ENCODE measurements at regions of chr13 and their contacts with region 1.

Region 1: DNA sequence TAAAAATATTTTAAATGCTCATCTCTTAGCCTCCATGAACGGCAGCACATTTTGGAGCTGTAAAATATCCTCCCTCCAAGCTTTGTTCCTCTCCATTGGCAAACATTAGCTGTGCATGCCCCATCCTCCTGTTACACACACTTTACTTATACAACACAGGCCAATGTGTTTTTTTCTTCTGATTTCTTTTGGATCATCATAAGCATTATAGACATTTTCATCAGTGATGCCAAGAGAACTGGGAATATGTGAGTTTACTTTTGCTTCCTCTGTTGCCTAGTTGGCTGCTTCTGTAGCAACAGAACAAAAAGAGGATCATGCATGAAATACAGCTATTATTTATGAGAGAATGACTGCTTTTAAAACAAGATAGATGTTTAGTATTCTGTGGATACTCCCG is 142.6 kb downstream of the PCDH9 start:
- DNase-seq: no peak

Region 2: DNA sequence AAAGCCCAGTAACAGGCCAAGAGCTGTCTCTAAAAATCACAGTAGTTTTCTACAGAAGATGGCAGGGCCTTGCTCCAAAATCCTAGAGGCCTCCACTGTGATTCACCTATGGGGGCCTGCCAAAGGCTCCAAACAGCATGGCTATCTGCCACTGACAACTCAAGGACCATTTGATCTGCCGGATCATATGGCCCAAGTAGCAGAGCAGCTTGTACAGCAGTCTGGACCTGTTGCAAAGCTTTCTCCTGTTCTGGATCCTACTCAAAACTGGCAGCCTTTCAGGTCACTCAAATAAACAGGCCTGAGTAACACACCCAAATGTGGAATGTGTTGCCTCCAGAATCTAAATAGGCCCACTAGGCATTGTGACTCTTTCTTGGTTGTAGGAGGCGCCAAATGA is 906.7 kb before region 1 on chr13:
- intact Hi-C with region 1: no loop called
- DNase-seq: no peak

Region 3: DNA sequence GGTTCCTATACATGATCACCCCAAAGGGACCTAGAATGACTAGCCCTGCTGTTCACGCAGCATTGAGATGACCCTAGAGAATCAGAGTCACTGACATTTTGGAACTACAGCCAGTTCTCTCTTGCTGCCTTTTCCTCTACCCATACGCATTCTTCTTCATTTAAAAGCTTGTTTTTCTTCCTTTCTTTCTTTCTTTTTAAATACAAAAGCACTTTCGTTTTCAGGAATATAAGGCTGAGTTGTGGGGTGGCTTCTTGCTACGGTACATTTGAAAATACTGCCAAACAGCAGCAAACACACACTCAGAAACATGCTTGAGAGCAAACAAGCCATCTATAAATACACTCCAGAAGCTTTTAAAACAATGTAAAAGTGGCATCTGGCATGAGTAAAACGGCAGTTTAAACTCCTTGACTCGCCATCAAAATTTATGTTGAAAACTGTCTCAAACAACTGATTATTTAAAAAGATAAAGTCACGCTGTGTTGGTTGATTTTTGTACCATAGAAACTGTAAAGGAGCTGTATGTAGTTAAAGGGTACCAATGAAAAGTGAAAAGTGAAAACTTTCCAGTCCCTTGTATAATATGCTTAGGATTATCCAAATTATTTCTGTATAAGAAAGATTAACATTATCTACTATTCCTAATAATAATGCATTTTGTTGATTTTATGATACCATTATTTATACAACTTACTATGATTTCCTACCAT is 47.0 kb after region 1 on chr13:
- intact Hi-C with region 1: loop called (anchors 5 kb)
- DNase-seq: no peak

Measured in cardiac septum (tissue), 1 donor.